PC-9 (cell line): ENCODE measurements at regions of chr3 and their contacts with region 1.

Region 1: DNA sequence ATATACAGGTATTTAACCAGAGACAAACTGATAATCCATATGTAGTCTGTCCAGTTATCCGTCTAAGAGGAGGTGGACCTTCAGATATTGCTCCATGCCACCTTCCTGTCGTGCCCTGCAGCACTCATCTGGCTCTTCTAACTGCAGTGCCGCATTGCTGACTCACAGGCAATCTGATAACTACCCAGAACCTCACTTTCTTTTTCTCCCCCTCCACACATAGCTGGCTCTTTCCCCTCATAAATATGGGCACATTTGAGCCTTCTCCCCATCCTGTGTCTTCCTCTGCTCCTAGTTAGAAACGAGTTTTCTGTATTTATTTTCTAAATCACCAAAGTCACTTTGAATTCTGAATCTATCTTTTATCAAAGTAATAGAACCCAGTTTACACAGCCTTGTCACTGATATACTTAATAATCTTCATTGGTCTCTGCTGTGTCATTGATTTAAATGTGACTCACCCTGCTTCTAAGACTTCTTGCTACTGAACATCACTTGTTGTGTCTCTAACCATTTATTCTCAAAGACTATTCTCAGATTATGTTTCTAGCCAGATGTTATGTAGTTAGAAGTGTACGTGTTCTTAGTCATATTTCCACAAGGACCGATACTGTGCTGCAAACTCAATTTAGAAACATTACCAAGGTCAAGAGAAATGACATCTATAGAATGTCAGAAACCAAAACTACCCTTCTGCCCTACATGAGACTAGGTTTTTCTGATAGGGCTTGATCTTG is 17.4 kb upstream of the KCNMB2 start:
- DNase-seq: peak; percentile 44 to 47
- H3K4me3 ChIP-seq: peak overlapping the region; percentile 19; the same call in 1 of the 2 replicates
- H3K27ac ChIP-seq: no peak overlapping the region
- H3K4me1 ChIP-seq: peaks cover 8% of the 10 kb centered on the region
- H3K27me3 ChIP-seq: no peaks in the 10 kb centered on the region
- CTCF ChIP-seq: no peak

Region 2: GRCh38 chr3:178270838-178271237 is 248.0 kb before region 1 on chr3:
- CTCF ChIA-PET with region 1: no interaction called
- POLR2A ChIA-PET with region 1: no interaction called
- intact Hi-C with region 1: no loop called
- DNase-seq: no peak
- H3K4me3 ChIP-seq: no peak overlapping the region
- H3K27ac ChIP-seq: no peak overlapping the region
- H3K4me1 ChIP-seq: no peaks in the 10 kb centered on the region
- H3K27me3 ChIP-seq: no peaks in the 10 kb centered on the region
- CTCF ChIP-seq: no peak

Region 3: GRCh38 chr3:178588628-178589027 is 69.8 kb after region 1 on chr3:
- CTCF ChIA-PET with region 1: no interaction called
- POLR2A ChIA-PET with region 1: interaction called, 10 read pairs
- intact Hi-C with region 1: no loop called
- DNase-seq: no peak
- H3K4me3 ChIP-seq: no peak overlapping the region
- H3K27ac ChIP-seq: no peak overlapping the region
- H3K4me1 ChIP-seq: no peaks in the 10 kb centered on the region
- H3K27me3 ChIP-seq: no peaks in the 10 kb centered on the region
- CTCF ChIP-seq: no peak